Heart right ventricle (tissue), 16 donors: ENCODE measurements at regions of chr7 and their contacts with region 1.

Region 1: GRCh38 chr7:21912305-21912704 is 33.4 kb downstream of the CDCA7L start:
- DNase-seq: peak; percentile 48 to 76
- ATAC-seq: peak; percentile 43 to 87 (median 77)
- H3K4me3 ChIP-seq: no peak overlapping the region
- H3K27ac ChIP-seq: peak overlapping the region in 8 of 10 donors; percentile 10 to 79 (median 53)
- H3K4me1 ChIP-seq: peaks cover 2 to 58% (median 17%) of the 10 kb centered on the region in 9 donors
- H3K27me3 ChIP-seq: no peaks in the 10 kb centered on the region
- CTCF ChIP-seq: no peak

Region 2: DNA sequence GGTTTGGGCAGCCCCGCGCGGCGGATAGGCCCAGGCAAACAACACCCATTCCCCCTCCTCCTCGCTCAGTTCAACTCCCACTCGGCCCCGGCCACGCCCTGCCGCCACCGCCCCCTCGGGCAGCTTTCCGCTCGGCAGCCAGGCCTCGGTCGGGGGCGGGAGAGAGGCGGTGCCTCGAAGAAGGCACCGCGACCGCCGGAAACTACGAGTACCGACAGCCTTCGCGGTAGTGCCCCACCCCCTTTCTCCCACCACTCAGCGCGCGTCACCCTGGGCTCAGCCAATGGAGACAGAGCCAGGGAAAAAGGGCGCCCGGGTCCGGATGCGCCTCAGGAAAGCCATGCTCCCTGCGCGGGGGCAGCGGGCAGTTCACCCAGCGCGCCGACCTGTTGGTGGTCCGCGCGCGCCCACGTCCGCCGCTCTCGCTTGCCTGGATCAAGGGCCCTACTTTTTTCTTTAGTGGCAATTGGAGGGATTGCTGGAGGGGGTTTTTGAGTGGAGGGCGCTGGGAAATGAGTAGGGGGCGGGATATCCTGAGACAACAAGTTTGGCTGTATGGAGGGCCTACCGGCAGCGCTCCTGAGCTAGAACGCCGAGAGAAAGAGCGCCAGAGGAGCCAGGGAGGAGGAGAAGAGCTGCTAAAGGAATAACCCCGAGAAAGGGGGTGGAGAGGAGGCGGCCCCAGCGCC is 485.0 kb before region 1 on chr7:
- intact Hi-C with region 1: loop called in 1 of 10 experiments (anchors 2 kb)
- DNase-seq: peak; percentile 99
- ATAC-seq: peak; percentile 91 to 97 (median 95)
- H3K4me3 ChIP-seq: peak overlapping the region; percentile 16 to 97 (median 80)
- H3K27ac ChIP-seq: peak overlapping the region; percentile 83 to 98 (median 94)
- H3K4me1 ChIP-seq: peaks cover 0 to 45% (median 41%) of the 10 kb centered on the region in 9 donors
- H3K27me3 ChIP-seq: no peaks in the 10 kb centered on the region
- CTCF ChIP-seq: peak in 7 of 9 donors; percentile 12 to 48 (median 29)

Region 3: GRCh38 chr7:21844742-21845141 is 67.6 kb before region 1 on chr7:
- intact Hi-C with region 1: no loop called
- DNase-seq: no peak
- ATAC-seq: no peak
- H3K4me3 ChIP-seq: no peak overlapping the region
- H3K27ac ChIP-seq: no peak overlapping the region
- H3K4me1 ChIP-seq: no peaks in the 10 kb centered on the region
- H3K27me3 ChIP-seq: no peaks in the 10 kb centered on the region
- CTCF ChIP-seq: no peak

Region 4: GRCh38 chr7:21945454-21946227 is 33.3 kb after region 1 on chr7 and contains the start of gene CDCA7L:
- intact Hi-C with region 1: loop called in 2 of 10 experiments (anchors 5 kb)
- DNase-seq: peak; percentile 67 to 85
- ATAC-seq: peak; percentile 92 to 97 (median 95)
- H3K4me3 ChIP-seq: peak within 1 kb of the TSS; percentile 54 to 84 (median 70)
- H3K27ac ChIP-seq: peak within 1 kb of the TSS; percentile 68 to 93 (median 84)
- H3K4me1 ChIP-seq: peaks cover 0 to 52% (median 24%) of the 10 kb centered on the region in 9 donors
- H3K27me3 ChIP-seq: peaks cover 0 to 4% (median 0%) of the 10 kb centered on the region in 7 donors
- CTCF ChIP-seq: peak in 1 of 9 donors; percentile 10
- total RNA-seq, gene CDCA7L: 31.2 to 59.1 (median 43.8) TPM

Region 5: GRCh38 chr7:22316914-22317313 is 404.6 kb after region 1 on chr7:
- intact Hi-C with region 1: no loop called
- DNase-seq: no peak
- ATAC-seq: no peak
- H3K4me3 ChIP-seq: no peak overlapping the region
- H3K27ac ChIP-seq: no peak overlapping the region
- H3K4me1 ChIP-seq: peaks cover 0 to 12% (median 0%) of the 10 kb centered on the region in 9 donors
- H3K27me3 ChIP-seq: no peaks in the 10 kb centered on the region
- CTCF ChIP-seq: no peak